ENCODE measurements at regions of chr5 and their contacts with region 1.

Region 1: DNA sequence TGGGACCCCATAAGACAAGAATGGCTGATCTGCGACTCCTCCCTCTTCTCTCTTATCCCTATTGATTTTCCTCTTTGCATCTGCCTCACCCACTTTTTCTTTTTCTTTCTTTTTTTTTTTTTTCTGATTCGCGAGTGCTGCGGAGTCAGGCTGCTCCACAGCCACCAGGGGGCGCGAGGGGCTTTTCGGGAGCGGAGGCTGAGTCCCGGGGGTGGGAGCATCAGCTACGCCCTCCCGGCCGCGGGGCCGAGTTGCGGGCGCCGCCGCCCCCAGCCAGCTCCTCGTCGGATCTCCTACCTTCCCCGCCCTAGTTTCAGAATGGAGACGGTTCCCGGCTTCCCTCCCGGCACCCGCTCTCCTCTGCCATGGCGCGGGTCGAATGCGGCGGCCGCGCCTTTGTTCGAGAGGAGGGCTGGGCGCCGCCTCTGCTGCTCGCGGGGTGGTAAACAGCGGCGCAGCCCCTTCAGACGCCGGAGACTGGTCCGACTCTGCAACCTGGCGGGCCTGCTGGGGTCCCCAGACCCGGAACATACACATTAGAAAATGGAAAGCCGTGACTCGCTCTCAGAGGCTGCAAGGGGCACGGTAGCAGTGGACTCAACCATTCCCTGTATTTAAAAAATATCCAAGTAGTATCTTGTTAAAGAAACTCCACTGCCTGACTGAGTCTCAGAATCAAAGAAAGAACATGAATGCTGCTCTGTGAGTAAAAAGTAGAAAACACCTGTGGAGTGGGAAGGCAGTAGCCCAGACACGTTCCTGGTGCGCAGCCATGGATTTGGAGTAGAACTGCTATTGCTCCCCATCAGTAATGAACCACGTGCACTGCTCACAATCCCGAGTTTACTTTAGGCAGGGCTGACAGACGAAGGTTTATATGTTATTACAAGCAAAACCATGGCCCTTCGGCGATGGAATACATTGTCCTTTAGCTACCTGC is 55.7 kb downstream of the DPYSL3 start:
- DNase-seq: peak; percentile 75
- H3K4me3 ChIP-seq: peak overlapping the region; percentile 71 to 86 (median 73)
- H3K27ac ChIP-seq: no peak overlapping the region
- H3K4me1 ChIP-seq: peaks cover 15% of the 10 kb centered on the region
- H3K27me3 ChIP-seq: no peaks in the 10 kb centered on the region
- CTCF ChIP-seq: peak; percentile 66 to 93

Region 2: GRCh38 chr5:146533260-146533857 is 920.8 kb before region 1 on chr5:
- CTCF ChIA-PET with region 1: no interaction called
- dilution Hi-C with region 1: no loop called
- in situ Hi-C with region 1: no loop called
- intact Hi-C with region 1: loop called (anchors 5 kb)
- DNase-seq: peak; percentile 55
- H3K4me3 ChIP-seq: no peak overlapping the region
- H3K27ac ChIP-seq: no peak overlapping the region
- H3K4me1 ChIP-seq: peaks cover 2% of the 10 kb centered on the region
- H3K27me3 ChIP-seq: no peaks in the 10 kb centered on the region
- CTCF ChIP-seq: peak; percentile 89 to 94

Region 3: GRCh38 chr5:147223948-147224791 is 230.0 kb before region 1 on chr5:
- CTCF ChIA-PET with region 1: no interaction called
- dilution Hi-C with region 1: no loop called
- in situ Hi-C with region 1: no loop called
- intact Hi-C with region 1: loop called (anchors 5 kb)
- DNase-seq: peak; percentile 21
- H3K4me3 ChIP-seq: no peak overlapping the region
- H3K27ac ChIP-seq: no peak overlapping the region
- H3K4me1 ChIP-seq: no peaks in the 10 kb centered on the region
- H3K27me3 ChIP-seq: peaks cover 2% of the 10 kb centered on the region
- CTCF ChIP-seq: peak; percentile 50 to 73

Region 4: GRCh38 chr5:147348046-147348445 is 106.1 kb before region 1 on chr5:
- CTCF ChIA-PET with region 1: no interaction called
- dilution Hi-C with region 1: no loop called
- in situ Hi-C with region 1: no loop called
- intact Hi-C with region 1: no loop called
- DNase-seq: peak; percentile 2
- H3K4me3 ChIP-seq: no peak overlapping the region
- H3K27ac ChIP-seq: no peak overlapping the region
- H3K4me1 ChIP-seq: no peaks in the 10 kb centered on the region
- H3K27me3 ChIP-seq: peaks cover 3% of the 10 kb centered on the region
- CTCF ChIP-seq: no peak

Region 5: GRCh38 chr5:147375151-147375550 is 79.0 kb before region 1 on chr5:
- CTCF ChIA-PET with region 1: no interaction called
- dilution Hi-C with region 1: no loop called
- in situ Hi-C with region 1: no loop called
- intact Hi-C with region 1: no loop called
- DNase-seq: no peak
- H3K4me3 ChIP-seq: no peak overlapping the region
- H3K27ac ChIP-seq: no peak overlapping the region
- H3K4me1 ChIP-seq: no peaks in the 10 kb centered on the region
- H3K27me3 ChIP-seq: peaks cover 3% of the 10 kb centered on the region
- CTCF ChIP-seq: no peak

Region 6: DNA sequence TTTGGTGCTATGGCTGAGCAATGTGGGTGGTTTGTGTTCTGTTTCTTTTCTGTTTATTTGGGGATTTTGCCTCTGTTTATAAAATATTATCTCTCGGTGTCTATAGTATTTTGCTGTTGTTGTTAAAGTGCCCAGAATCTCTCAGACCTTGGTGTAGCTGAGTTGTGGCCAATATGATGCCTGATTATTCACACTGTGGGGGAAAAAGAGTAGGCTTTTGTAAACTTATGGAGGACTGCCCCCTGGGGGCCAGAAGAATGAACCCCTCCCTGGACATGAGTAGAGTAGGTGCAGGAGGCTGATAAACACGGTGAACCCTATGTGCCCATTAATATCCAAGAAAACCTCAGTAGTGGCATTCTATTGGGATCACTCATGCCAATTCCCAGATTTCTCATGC is 104.7 kb after region 1 on chr5:
- CTCF ChIA-PET with region 1: no interaction called
- dilution Hi-C with region 1: no loop called
- in situ Hi-C with region 1: loop called (anchors 5 to 10 kb)
- intact Hi-C with region 1: loop called (anchors 1 kb)
- DNase-seq: peak; percentile 57
- H3K4me3 ChIP-seq: no peak overlapping the region
- H3K27ac ChIP-seq: no peak overlapping the region
- H3K4me1 ChIP-seq: peaks cover 4% of the 10 kb centered on the region
- H3K27me3 ChIP-seq: no peaks in the 10 kb centered on the region
- CTCF ChIP-seq: peak; percentile 61 to 71

Region 7: GRCh38 chr5:147576646-147577535 is 122.7 kb after region 1 on chr5:
- CTCF ChIA-PET with region 1: interaction called, 5 read pairs
- dilution Hi-C with region 1: no loop called
- in situ Hi-C with region 1: no loop called
- intact Hi-C with region 1: loop called (anchors 1 kb)
- DNase-seq: peak; percentile 32
- H3K4me3 ChIP-seq: no peak overlapping the region
- H3K27ac ChIP-seq: no peak overlapping the region
- H3K4me1 ChIP-seq: peaks cover 3% of the 10 kb centered on the region
- H3K27me3 ChIP-seq: peaks cover 2% of the 10 kb centered on the region
- CTCF ChIP-seq: peak; percentile 89 to 97

Region 8: GRCh38 chr5:147822686-147823491 is 368.7 kb after region 1 on chr5:
- CTCF ChIA-PET with region 1: no interaction called
- dilution Hi-C with region 1: no loop called
- in situ Hi-C with region 1: no loop called
- intact Hi-C with region 1: loop called (anchors 10 kb)
- DNase-seq: peak; percentile 36
- H3K4me3 ChIP-seq: no peak overlapping the region
- H3K27ac ChIP-seq: no peak overlapping the region
- H3K4me1 ChIP-seq: no peaks in the 10 kb centered on the region
- H3K27me3 ChIP-seq: no peaks in the 10 kb centered on the region
- CTCF ChIP-seq: peak; percentile 94 to 96

Region 9: GRCh38 chr5:147963948-147964693 is 510.0 kb after region 1 on chr5:
- CTCF ChIA-PET with region 1: no interaction called
- dilution Hi-C with region 1: no loop called
- in situ Hi-C with region 1: no loop called
- intact Hi-C with region 1: no loop called
- DNase-seq: peak; percentile 54
- H3K4me3 ChIP-seq: no peak overlapping the region
- H3K27ac ChIP-seq: no peak overlapping the region
- H3K4me1 ChIP-seq: no peaks in the 10 kb centered on the region
- H3K27me3 ChIP-seq: no peaks in the 10 kb centered on the region
- CTCF ChIP-seq: no peak